Right ventricle myocardium superior (tissue), 1 donor: ENCODE measurements at regions of chr1 and their contacts with region 1.

Region 1: GRCh38 chr1:86470859-86471258 is 2.1 kb downstream of the CLCA1 start:
- DNase-seq: no peak
- ATAC-seq: no peak

Region 2: DNA sequence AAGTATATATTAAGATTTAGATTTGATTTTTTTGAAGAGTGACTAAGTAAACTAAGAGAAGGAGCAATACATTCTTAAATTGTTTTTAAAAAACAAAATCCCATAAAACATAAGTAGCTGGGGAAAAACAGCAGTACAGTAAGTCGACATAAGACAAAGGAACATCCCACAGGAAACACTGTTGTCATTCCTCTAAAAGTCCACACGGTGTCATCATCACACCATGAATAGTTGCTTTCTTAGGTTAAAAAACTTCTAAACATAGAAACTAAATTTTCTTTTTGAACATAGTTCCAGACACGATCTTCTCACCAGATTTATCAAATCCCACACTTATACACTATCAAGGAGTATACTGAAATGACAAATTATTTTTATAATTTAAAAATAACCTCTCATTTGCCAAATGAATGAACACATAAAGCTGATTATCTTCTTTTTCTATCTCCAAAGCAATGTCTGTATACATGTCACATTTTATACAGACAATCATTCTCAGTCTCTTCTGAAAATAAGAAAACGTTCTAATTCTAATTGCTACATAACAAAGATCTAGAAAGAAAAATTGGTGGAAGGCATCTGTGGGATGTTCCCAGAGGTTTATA is 90.5 kb before region 1 on chr1:
- intact Hi-C with region 1: loop called (anchors 10 kb)
- DNase-seq: no peak
- ATAC-seq: peak; percentile 80

Region 3: GRCh38 chr1:86507935-86508582 is 37.2 kb after region 1 on chr1:
- intact Hi-C with region 1: loop called (anchors 5 kb)
- DNase-seq: no peak
- ATAC-seq: no peak